Activated CD8-positive, alpha-beta T cell treated with anti-CD3 and anti-CD28 coated beads for 36 hours (primary cell): ENCODE measurements at regions of chr11 and their contacts with region 1.

Region 1: GRCh38 chr11:112086422-112087191 is at the starts of genes SDHD and TIMM8B:
- DNase-seq: peak; percentile 94
- ATAC-seq: peak; percentile 87
- H3K4me3 Mint-ChIP-seq: peak within 1 kb of the TSS; percentile 93
- H3K27ac Mint-ChIP-seq: peak within 1 kb of the TSS; percentile 94
- H3K4me1 Mint-ChIP-seq: peaks cover 60% of the 10 kb centered on the region
- H3K27me3 Mint-ChIP-seq: no peaks in the 10 kb centered on the region
- CTCF ChIP-seq: no peak
- total RNA-seq, gene SDHD: 100 to 101 TPM
- total RNA-seq, gene TIMM8B: 52.9 to 54.1 TPM

Region 2: GRCh38 chr11:111878849-111879636 is 207.6 kb before region 1 on chr11 and contains the starts of genes CFAP68 and FDXACB1:
- CTCF ChIA-PET with region 1: no interaction called
- POLR2A ChIA-PET with region 1: interaction called, 3 read pairs
- intact Hi-C with region 1: loop called (anchors 10 kb)
- DNase-seq: peak; percentile 97
- ATAC-seq: peak; percentile 94
- H3K4me3 Mint-ChIP-seq: peak within 1 kb of the TSS; percentile 88
- H3K27ac Mint-ChIP-seq: peak within 1 kb of the TSS; percentile 99
- H3K4me1 Mint-ChIP-seq: peaks cover 24% of the 10 kb centered on the region
- H3K27me3 Mint-ChIP-seq: no peaks in the 10 kb centered on the region
- CTCF ChIP-seq: peak; percentile 92
- total RNA-seq, gene CFAP68: 38.6 to 39.1 TPM
- total RNA-seq, gene FDXACB1: 6.9 to 7.1 TPM

Region 3: GRCh38 chr11:112050721-112051120 is 35.9 kb before region 1 on chr11:
- CTCF ChIA-PET with region 1: no interaction called
- POLR2A ChIA-PET with region 1: no interaction called
- intact Hi-C with region 1: no loop called
- DNase-seq: no peak
- ATAC-seq: no peak
- H3K4me3 Mint-ChIP-seq: no peak overlapping the region
- H3K27ac Mint-ChIP-seq: no peak overlapping the region
- H3K4me1 Mint-ChIP-seq: peaks cover 18% of the 10 kb centered on the region
- H3K27me3 Mint-ChIP-seq: no peaks in the 10 kb centered on the region
- CTCF ChIP-seq: no peak

Region 4: DNA sequence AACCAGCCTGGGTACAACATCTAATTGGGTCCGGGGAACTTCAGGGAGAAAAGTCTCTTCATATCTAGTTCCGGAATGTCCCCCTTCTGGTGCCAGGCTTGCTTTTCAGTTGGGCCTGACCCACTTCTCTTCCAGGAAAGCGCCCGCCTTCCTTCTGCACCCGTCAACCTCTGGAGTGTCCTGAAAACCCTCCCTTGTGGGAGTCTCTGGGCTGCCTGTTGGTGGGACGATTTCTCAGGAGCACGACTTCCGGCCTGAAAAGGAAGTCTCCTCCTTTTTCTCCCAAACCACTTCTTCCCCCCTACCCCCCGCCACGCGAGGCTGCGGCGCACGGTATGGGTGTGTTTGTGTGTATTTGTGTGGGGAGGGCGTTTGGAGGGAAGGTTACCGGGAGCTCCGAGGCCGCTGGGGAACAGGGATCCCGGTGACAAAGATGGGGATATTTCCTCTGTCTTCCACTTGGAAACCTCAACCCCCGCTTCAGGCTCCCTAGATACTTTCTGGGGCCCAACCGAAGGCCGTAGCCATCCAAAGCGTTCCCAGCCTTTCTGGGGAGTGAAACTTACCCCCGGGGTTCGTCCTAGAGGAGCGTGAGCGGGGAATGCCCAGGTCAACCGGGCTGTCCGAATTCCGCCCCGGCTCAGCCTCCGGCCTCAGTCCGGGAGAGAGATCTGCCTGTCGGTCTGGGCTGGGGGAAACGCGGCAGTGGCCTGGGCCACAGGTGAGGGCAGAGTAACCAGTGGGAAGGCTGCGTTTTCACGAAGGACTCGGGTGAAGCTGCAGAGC is 12.4 kb before region 1 on chr11 and contains the start of gene NKAPD1:
- CTCF ChIA-PET with region 1: interaction called, 3 read pairs
- POLR2A ChIA-PET with region 1: interaction called, 21 read pairs
- intact Hi-C with region 1: no loop called
- DNase-seq: peak; percentile 89
- ATAC-seq: peak; percentile 83
- H3K4me3 Mint-ChIP-seq: peak within 1 kb of the TSS; percentile 95
- H3K27ac Mint-ChIP-seq: peak within 1 kb of the TSS; percentile 98
- H3K4me1 Mint-ChIP-seq: peaks cover 35% of the 10 kb centered on the region
- H3K27me3 Mint-ChIP-seq: peaks cover 7% of the 10 kb centered on the region
- CTCF ChIP-seq: no peak
- total RNA-seq, gene NKAPD1: 20.8 to 22.6 TPM